IMR-90 (cell line): ENCODE measurements at regions of chr3 and their contacts with region 1.

Region 1: DNA sequence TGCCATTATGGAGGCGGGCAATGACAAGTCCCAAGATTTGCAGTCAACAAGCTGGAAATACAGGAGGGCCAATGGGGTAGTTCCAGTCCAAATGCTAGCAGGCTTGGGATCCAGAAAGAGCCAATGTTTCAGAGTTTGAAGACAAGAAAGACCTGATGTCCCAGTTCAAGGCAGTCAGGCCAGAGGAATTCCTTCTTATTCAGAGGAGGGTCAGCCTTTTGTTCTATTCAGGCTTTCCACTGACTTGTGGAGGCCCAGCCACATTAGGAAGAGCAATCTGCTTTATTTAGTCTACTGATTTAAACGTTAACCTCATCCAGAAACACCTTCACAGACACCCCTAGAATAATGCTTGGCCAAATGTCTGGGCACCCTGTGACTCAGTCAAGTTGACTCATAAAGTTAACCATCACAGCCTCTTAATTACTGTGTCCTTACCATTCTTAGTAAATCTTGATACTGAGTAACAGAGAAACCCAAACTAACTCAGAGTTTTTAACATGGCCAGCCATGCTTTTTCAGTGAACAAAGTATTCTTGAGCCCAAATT is 50.9 kb upstream of the NPHP3 start:
- DNase-seq: no peak
- ATAC-seq: no peak
- H3K4me3 ChIP-seq: no peak overlapping the region
- H3K27ac ChIP-seq: no peak overlapping the region
- H3K4me1 ChIP-seq: no peaks in the 10 kb centered on the region
- H3K27me3 ChIP-seq: no peaks in the 10 kb centered on the region
- CTCF ChIP-seq: no peak
- POLR2A ChIP-seq: no peak
- RAD21 ChIP-seq: no peak

Region 2: DNA sequence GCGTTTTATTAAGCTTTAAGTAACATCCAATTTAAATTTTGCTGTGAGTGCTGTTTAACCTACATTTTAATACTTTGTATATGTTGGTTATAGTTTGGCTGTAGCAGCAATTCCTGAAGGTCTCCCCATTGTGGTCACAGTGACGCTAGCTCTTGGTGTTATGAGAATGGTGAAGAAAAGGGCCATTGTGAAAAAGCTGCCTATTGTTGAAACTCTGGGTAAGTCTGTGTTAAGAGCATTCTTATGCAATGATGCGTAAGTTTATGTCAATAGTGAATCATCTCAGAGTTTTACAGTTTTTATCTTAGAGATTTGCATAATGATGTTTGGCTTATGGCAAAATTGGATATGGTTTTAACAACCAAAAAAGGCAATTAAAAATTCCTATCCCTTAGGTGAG is 1809.3 kb before region 1 on chr3:
- CTCF ChIA-PET with region 1: no interaction called
- POLR2A ChIA-PET with region 1: no interaction called
- dilution Hi-C with region 1: no loop called
- in situ Hi-C with region 1: no loop called
- intact Hi-C with region 1: no loop called
- DNase-seq: peak; percentile 98
- ATAC-seq: peak; percentile 84
- H3K4me3 ChIP-seq: no peak overlapping the region
- H3K27ac ChIP-seq: peak overlapping the region; percentile 64; the same call in 1 of the 2 replicates
- H3K4me1 ChIP-seq: peaks cover 5% of the 10 kb centered on the region
- H3K27me3 ChIP-seq: no peaks in the 10 kb centered on the region
- CTCF ChIP-seq: no peak
- POLR2A ChIP-seq: no peak
- RAD21 ChIP-seq: no peak

Region 3: GRCh38 chr3:132709761-132710160 is 63.4 kb before region 1 on chr3:
- CTCF ChIA-PET with region 1: no interaction called
- POLR2A ChIA-PET with region 1: no interaction called
- dilution Hi-C with region 1: no loop called
- in situ Hi-C with region 1: no loop called
- intact Hi-C with region 1: no loop called
- DNase-seq: no peak
- ATAC-seq: no peak
- H3K4me3 ChIP-seq: no peak overlapping the region
- H3K27ac ChIP-seq: no peak overlapping the region
- H3K4me1 ChIP-seq: no peaks in the 10 kb centered on the region; the same call in 1 of the 2 replicates
- H3K27me3 ChIP-seq: no peaks in the 10 kb centered on the region
- CTCF ChIP-seq: no peak
- POLR2A ChIP-seq: no peak
- RAD21 ChIP-seq: no peak

Region 4: GRCh38 chr3:132722164-132723024 is 50.8 kb before region 1 on chr3 and contains the start of gene NPHP3:
- CTCF ChIA-PET with region 1: no interaction called
- POLR2A ChIA-PET with region 1: no interaction called
- dilution Hi-C with region 1: no loop called
- in situ Hi-C with region 1: no loop called
- intact Hi-C with region 1: no loop called
- DNase-seq: peak; percentile 96
- ATAC-seq: peak; percentile 87
- H3K4me3 ChIP-seq: peak within 1 kb of the TSS; percentile 96
- H3K27ac ChIP-seq: peak within 1 kb of the TSS; percentile 88
- H3K4me1 ChIP-seq: peaks cover 7% of the 10 kb centered on the region
- H3K27me3 ChIP-seq: no peaks in the 10 kb centered on the region
- CTCF ChIP-seq: no peak
- POLR2A ChIP-seq: peak; percentile 89
- RAD21 ChIP-seq: no peak
- total RNA-seq, gene NPHP3: 21.3 and 26.9 TPM in 2 replicates

Region 5: DNA sequence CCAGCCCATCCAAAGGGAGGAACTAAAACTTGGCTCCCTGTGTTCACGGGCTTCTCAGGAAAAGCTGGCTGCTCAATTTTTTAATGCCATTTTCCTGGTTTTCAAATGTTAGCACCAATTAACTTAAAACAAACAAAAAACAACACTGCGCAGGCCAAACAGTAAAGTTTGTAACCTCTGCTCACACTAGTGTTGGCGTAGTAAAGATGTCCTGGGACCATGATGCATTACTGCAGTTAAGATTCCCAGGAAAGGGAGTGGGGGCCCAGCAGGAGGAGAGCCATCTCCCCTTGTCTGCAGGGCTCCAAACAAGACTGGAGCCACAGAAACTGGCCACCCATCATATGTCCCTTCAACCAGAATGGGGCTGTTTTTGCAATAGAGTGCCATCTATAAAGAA is 1803.7 kb after region 1 on chr3:
- CTCF ChIA-PET with region 1: no interaction called
- POLR2A ChIA-PET with region 1: interaction called, 16 read pairs
- dilution Hi-C with region 1: no loop called
- in situ Hi-C with region 1: no loop called
- intact Hi-C with region 1: no loop called
- DNase-seq: no peak
- ATAC-seq: no peak
- H3K4me3 ChIP-seq: no peak overlapping the region
- H3K27ac ChIP-seq: no peak overlapping the region
- H3K4me1 ChIP-seq: no peaks in the 10 kb centered on the region
- H3K27me3 ChIP-seq: no peaks in the 10 kb centered on the region
- CTCF ChIP-seq: no peak
- POLR2A ChIP-seq: no peak
- RAD21 ChIP-seq: no peak